ENCODE measurements at regions of chr18 and their contacts with region 1.

Region 1: DNA sequence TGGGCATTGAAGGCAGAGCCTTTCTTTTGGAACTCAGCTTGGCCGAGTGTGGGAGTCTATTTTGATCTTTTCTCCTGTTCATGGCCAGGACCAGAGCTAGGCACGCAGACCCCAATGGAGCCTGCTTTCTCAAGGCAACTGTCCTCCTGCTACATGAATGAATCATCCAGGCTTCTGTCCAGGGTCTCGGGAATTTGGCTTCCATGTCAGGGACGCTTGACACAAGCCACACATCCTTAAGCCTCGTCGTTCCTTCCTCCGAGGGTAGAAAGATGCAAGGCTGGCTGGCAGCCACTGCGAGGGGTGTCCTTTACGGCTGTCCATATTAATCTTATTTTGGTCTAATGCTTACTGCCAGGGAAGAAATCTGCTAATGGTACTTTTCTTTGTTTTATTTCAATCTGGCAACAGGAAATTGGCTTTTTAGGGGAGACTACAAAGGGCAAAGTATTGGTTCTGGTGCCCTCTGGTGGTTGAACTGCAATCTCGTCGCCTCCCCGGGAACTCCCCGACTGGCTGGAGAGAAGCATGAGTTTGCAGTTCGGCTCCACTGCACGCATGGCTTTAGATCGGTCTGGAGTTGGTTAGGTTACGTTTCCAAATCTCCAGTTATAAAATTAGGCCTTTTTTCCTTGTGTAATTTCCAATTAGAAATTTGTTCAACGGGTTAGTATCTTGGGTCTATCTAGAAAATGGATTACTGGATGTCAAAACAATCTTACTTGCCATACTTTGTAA is 135.2 kb downstream of the ALPK2 start:
- DNase-seq: peak; percentile 68 to 86 (median 83)
- ATAC-seq: peak; percentile 88 to 89
- H3K4me3 ChIP-seq: no peak overlapping the region
- H3K27ac ChIP-seq: peak overlapping the region; percentile 68
- H3K4me1 ChIP-seq: peaks cover 10% of the 10 kb centered on the region
- H3K27me3 ChIP-seq: no peaks in the 10 kb centered on the region

Region 2: DNA sequence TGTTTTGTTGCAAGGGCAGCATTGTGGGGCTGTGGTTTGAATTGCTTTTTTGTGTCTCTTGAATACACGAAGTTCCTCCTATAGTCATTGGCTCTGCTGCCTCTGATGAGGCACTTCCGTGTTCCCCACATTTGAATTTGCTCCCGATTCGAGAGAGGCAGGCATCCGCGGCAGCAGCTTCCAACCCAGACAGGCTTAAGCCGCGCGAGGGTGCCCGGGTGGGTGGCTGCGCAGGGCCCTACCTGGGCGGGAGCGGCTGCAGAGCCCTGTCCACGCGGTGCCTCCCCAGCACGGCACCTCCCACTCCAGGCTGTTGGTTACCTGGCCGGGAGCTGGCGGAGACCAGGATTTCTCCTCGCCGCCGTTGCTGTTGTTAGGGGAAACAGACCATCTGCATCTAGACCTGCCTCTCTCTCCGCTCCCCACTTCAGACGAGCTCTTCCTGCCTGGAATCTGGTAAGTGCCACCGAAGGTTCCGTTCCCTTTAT is 298.4 kb before region 1 on chr18:
- intact Hi-C with region 1: loop called in 1 of 4 experiments (anchors 10 kb)
- DNase-seq: peak in 2 of 3 donors; percentile 59 to 66
- ATAC-seq: peak; percentile 49 to 55
- H3K4me3 ChIP-seq: peak overlapping the region; percentile 26
- H3K27ac ChIP-seq: no peak overlapping the region
- H3K4me1 ChIP-seq: peaks cover 5% of the 10 kb centered on the region
- H3K27me3 ChIP-seq: no peaks in the 10 kb centered on the region

Region 3: DNA sequence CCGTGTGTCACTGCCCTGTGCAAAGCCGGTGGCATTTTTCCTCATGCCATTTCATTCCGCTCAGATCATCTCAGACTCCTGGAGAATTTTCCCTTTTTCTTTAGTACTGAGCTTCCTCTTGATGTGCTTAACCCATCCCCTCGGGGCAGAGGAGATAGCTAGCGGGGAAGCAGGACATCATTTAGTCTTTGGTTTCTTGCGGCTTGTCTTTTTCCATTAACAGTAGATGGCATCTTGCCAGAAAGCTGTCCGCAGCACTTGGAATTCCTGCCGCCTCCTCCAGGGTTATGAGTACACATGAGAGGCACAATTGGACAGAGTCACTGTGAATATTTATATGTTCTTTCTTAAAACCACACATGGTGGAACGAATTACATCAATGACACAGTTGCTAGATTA is 91.4 kb before region 1 on chr18:
- intact Hi-C with region 1: loop called (anchors 5 to 10 kb)
- DNase-seq: no peak
- ATAC-seq: peak; percentile 20 to 36
- H3K4me3 ChIP-seq: no peak overlapping the region
- H3K27ac ChIP-seq: no peak overlapping the region
- H3K4me1 ChIP-seq: peaks cover 5% of the 10 kb centered on the region
- H3K27me3 ChIP-seq: no peaks in the 10 kb centered on the region